PC-9 (cell line): ENCODE measurements at regions of chr15 and their contacts with region 1.

Region 1: DNA sequence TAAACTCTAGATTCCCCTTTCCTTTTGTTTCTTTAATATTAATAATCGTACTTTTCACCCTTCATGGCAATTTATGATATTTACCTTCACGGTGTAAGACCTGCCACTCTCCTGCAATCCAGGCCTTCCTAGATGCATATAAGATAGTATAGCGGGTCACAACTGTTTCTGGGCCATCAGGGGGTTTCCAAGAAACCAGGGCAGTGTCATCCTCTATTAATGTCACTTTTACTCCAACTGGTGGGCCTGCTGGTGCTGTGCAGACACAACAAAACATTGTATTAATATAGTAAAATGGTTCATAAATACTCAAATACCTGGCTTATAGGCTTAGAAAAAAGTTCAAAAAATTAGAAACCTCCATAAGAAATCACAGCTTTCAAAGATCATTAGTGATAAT is 48.9 kb upstream of the PYGO1 start:
- DNase-seq: no peak
- H3K4me3 ChIP-seq: no peak overlapping the region
- H3K27ac ChIP-seq: no peak overlapping the region
- H3K4me1 ChIP-seq: no peaks in the 10 kb centered on the region
- H3K27me3 ChIP-seq: no peaks in the 10 kb centered on the region
- CTCF ChIP-seq: no peak

Region 2: DNA sequence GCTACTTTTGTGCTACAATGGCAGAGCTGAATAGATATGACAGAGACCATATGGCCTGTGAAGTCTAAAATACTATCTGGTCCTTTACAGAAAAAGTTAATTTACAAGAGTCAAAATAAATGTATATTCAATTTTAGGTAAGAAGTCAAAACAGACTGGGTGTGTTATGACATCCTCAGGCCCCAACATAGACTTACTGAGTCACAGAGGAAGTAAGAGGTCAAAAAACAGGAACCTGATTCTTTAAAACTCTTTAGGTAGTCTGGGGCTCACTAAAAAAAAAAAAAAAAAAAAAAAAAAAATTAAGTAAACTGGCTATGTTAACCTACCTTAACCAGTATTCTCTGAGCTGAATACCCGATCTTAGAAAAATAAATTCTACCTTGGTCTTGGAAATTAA is 142.2 kb before region 1 on chr15:
- CTCF ChIA-PET with region 1: no interaction called
- POLR2A ChIA-PET with region 1: no interaction called
- intact Hi-C with region 1: no loop called
- DNase-seq: no peak
- H3K4me3 ChIP-seq: no peak overlapping the region
- H3K27ac ChIP-seq: no peak overlapping the region
- H3K4me1 ChIP-seq: no peaks in the 10 kb centered on the region
- H3K27me3 ChIP-seq: no peaks in the 10 kb centered on the region
- CTCF ChIP-seq: no peak

Region 3: GRCh38 chr15:55658886-55659285 is 21.8 kb after region 1 on chr15:
- CTCF ChIA-PET with region 1: no interaction called
- POLR2A ChIA-PET with region 1: interaction called, 12 read pairs
- intact Hi-C with region 1: no loop called
- DNase-seq: no peak
- H3K4me3 ChIP-seq: no peak overlapping the region
- H3K27ac ChIP-seq: no peak overlapping the region
- H3K4me1 ChIP-seq: no peaks in the 10 kb centered on the region
- H3K27me3 ChIP-seq: no peaks in the 10 kb centered on the region
- CTCF ChIP-seq: no peak

Region 4: DNA sequence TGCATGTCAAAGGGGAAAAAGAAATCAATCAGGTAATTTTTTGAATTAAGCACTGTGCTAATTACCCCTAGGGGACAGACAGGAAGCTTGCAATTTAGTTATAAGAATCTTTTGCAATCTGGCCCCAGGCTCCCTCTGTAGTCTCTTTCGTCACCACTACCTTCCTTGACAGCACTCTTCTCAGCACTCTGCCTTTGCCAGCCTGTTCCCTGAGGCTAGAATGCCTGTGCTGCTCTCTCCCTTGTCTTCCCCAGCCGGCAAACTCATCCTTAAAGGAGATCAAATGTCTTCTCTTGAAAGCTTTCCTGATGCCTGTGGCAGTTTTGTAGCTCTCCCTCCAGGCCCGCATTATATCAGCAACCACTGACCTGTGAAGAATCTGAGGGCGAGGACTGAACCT is 138.2 kb after region 1 on chr15:
- CTCF ChIA-PET with region 1: no interaction called
- POLR2A ChIA-PET with region 1: no interaction called
- intact Hi-C with region 1: no loop called
- DNase-seq: peak; percentile 68 to 87
- H3K4me3 ChIP-seq: no peak overlapping the region
- H3K27ac ChIP-seq: 0 out of 2 replicates have a peak overlapping the region, but pooled peaks have one; percentile 35
- H3K4me1 ChIP-seq: peaks cover 15% of the 10 kb centered on the region
- H3K27me3 ChIP-seq: no peaks in the 10 kb centered on the region
- CTCF ChIP-seq: no peak